Dendritic cell treated with granulocyte-macrophage colony-stimulating factor and Interleukin-4, amounts not matched to agents 40 ng/mL and 50 ng/mL, for 4 days (primary cell): ENCODE measurements at regions of chr1 and their contacts with region 1.

Region 1: DNA sequence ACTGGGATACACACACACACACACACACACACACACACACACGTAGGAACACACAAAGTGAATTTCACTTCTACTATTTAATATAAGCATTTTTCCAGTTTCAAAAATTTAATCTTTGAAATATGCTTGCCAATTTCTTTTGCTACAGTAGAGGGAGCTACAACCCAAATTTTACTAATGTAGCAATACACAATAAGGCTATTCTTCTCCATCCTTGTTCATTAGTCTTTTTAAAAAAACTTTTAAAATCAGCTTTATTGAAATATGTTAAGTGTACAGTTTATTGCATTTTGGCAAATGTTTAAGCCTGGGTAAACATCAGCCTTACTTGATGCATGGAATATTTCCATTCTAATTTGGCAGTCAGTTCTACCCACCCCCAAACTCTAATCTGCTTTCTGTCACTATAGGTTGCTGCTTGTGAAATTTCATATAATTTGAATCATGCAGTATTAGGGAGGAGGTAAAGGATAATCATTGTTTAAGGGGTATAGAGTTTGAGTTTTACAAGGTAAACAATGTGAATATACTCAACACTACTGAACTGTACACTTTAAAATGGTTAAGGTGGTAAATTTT is 93.0 kb upstream of the TENT5C start:
- H3K4me3 Mint-ChIP-seq: no peak overlapping the region
- H3K27ac Mint-ChIP-seq: no peak overlapping the region
- H3K4me1 Mint-ChIP-seq: no peaks in the 10 kb centered on the region
- H3K27me3 Mint-ChIP-seq: no peaks in the 10 kb centered on the region

Region 2: DNA sequence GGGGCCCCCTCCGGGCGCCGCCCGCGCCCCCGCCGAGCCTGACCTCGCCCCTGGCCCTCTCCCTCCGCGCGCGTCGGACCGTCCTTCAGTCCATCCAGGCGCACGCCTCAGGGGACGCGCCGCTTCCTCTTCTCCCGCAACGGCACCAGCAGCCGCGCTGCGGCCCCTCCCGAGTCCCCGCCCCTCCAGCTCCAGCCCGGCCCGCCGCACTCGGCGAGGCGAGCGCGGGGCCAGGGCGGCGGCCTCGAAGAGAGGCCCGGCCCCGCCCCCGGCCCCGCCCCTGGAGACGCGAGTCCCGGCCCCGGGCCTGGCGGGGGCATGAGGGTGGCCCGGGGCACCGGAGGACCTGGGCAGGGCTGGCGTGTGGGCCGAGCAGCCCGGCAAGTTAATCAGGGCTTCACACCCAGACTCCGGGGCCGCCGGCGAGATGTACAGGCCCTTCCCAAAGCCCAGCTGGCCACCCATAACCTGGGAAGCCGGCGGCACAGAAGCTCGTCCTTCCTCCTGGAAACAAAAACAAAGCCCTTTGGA is 845.2 kb before region 1 on chr1 and contains the start of gene IGSF3:
- intact Hi-C with region 1: no loop called
- H3K4me3 Mint-ChIP-seq: peak within 1 kb of the TSS; percentile 66
- H3K27ac Mint-ChIP-seq: peak within 1 kb of the TSS; percentile 14
- H3K4me1 Mint-ChIP-seq: peaks cover 25% of the 10 kb centered on the region
- H3K27me3 Mint-ChIP-seq: peaks cover 57% of the 10 kb centered on the region

Region 3: GRCh38 chr1:117654493-117655219 is 141.8 kb after region 1 on chr1:
- intact Hi-C with region 1: no loop called
- H3K4me3 Mint-ChIP-seq: no peak overlapping the region
- H3K27ac Mint-ChIP-seq: no peak overlapping the region
- H3K4me1 Mint-ChIP-seq: peaks cover 6% of the 10 kb centered on the region
- H3K27me3 Mint-ChIP-seq: peaks cover 11% of the 10 kb centered on the region

Region 4: GRCh38 chr1:117758444-117759316 is 245.8 kb after region 1 on chr1:
- intact Hi-C with region 1: loop called (anchors 2 kb)
- H3K4me3 Mint-ChIP-seq: peak overlapping the region; percentile 66
- H3K27ac Mint-ChIP-seq: no peak overlapping the region
- H3K4me1 Mint-ChIP-seq: peaks cover 10% of the 10 kb centered on the region
- H3K27me3 Mint-ChIP-seq: peaks cover 15% of the 10 kb centered on the region